ENCODE measurements at regions of chr1 and their contacts with region 1.

Region 1: GRCh38 chr1:27556781-27557595 is 47.0 kb downstream of the AHDC1 start:
- DNase-seq: peak; percentile 87
- ATAC-seq: peak; percentile 82
- H3K4me3 Mint-ChIP-seq: no peak overlapping the region
- H3K27ac Mint-ChIP-seq: peak overlapping the region; percentile 84
- H3K4me1 Mint-ChIP-seq: peaks cover 27% of the 10 kb centered on the region
- H3K27me3 Mint-ChIP-seq: no peaks in the 10 kb centered on the region

Region 2: DNA sequence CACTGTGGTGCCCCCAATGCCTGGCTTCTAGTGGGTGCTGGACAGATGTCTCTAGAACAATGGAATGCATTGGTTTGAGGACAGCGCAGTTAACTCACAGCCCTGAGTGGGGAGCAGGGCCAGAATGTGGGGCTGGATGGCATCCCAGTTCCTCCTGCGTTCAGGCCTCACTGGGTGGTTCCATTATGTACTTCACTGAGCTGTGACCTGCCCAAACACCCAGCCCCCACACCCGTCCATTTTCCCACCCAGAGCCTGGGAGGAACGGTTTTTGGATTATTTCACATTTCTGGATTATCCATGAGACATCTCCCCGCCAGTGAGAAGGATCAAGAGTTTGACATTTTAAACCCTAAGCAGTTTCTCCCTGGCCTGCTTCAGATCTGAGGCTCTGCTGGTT is 11.7 kb before region 1 on chr1:
- CTCF ChIA-PET with region 1: interaction called, 22 read pairs
- DNase-seq: no peak
- ATAC-seq: no peak
- H3K4me3 Mint-ChIP-seq: no peak overlapping the region
- H3K27ac Mint-ChIP-seq: no peak overlapping the region
- H3K4me1 Mint-ChIP-seq: peaks cover 4% of the 10 kb centered on the region
- H3K27me3 Mint-ChIP-seq: no peaks in the 10 kb centered on the region

Region 3: DNA sequence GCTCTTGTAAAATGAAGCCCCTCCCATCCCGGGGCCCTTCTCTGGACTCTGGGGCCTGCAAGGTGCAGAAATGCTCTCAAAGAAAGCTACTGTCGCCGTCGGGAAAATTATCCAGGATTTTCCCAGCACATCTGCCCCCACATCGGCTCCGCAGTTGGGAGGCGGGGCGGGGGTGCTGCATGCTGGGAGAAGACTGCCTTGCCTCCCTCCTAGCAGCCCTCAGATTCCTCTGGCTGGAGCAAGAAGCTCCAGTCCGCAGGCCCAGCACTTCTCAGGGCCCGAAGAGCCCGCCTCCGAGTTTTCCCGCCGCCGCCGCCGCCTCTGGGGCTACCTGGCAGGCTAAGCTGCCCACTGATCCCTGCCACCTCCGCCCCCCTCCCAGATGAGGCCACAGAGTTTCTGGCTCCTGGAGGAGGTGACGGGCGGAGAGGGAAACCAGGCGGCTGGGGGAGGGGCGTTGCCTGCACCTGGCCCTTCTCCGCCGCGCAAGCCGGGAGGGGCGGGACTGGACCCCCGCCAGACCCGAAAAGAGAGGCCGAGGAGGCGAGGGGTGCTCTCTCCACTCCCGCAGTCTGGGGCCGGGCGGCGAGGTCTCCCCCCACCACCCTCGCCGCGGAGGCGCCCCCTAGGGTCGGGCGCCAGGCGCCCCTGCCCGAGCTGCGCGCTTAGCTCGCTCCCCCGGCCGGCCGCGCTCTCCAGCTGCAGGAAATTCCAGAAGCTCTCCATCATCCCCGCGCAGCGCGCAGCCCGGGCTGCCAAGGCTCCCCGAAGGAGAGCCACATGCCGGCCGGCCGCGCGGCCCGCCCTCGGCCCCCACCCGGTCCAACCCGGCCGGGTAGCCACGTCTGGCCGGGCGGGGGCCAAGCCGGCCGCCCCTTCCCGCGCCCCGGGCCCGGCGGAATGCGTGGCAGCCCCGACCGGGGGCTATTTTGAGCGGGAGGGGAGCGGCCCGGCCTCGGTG is 18.2 kb after region 1 on chr1:
- CTCF ChIA-PET with region 1: interaction called, 126 read pairs
- DNase-seq: no peak
- ATAC-seq: no peak
- H3K4me3 Mint-ChIP-seq: no peak overlapping the region
- H3K27ac Mint-ChIP-seq: no peak overlapping the region
- H3K4me1 Mint-ChIP-seq: peaks cover 9% of the 10 kb centered on the region
- H3K27me3 Mint-ChIP-seq: peaks cover 18% of the 10 kb centered on the region

Region 4: GRCh38 chr1:27594562-27595510 is 37.8 kb after region 1 on chr1:
- CTCF ChIA-PET with region 1: interaction called, 48 read pairs
- DNase-seq: peak; percentile 56
- ATAC-seq: peak; percentile 54
- H3K4me3 Mint-ChIP-seq: no peak overlapping the region
- H3K27ac Mint-ChIP-seq: no peak overlapping the region
- H3K4me1 Mint-ChIP-seq: peaks cover 18% of the 10 kb centered on the region
- H3K27me3 Mint-ChIP-seq: no peaks in the 10 kb centered on the region

Measured in activated CD8-positive, alpha-beta memory T cell treated with anti-CD3 and anti-CD28 coated beads, Interleukin-2, amount 10 ng/mL, durations not matched to agents 7 days and 5 days (primary cell).